AG04450 (cell line): ENCODE measurements at regions of chr4 and their contacts with region 1.

Region 1: GRCh38 chr4:106369456-106370060 is 980 bp upstream of the GIMD1 start:
- DNase-seq: peak; percentile 61
- H3K4me3 ChIP-seq: no peak overlapping the region
- H3K27ac ChIP-seq: no peak overlapping the region
- H3K27me3 ChIP-seq: no peaks in the 10 kb centered on the region
- CTCF ChIP-seq: peak; percentile 82

Region 2: GRCh38 chr4:106231931-106232330 is 137.6 kb before region 1 on chr4:
- CTCF ChIA-PET with region 1: no interaction called
- POLR2A ChIA-PET with region 1: no interaction called
- DNase-seq: no peak
- H3K4me3 ChIP-seq: no peak overlapping the region
- H3K27ac ChIP-seq: no peak overlapping the region
- H3K27me3 ChIP-seq: no peaks in the 10 kb centered on the region
- CTCF ChIP-seq: no peak

Region 3: GRCh38 chr4:106266201-106266600 is 103.4 kb before region 1 on chr4:
- CTCF ChIA-PET with region 1: interaction called, 22 read pairs
- POLR2A ChIA-PET with region 1: no interaction called
- DNase-seq: peak; percentile 18
- H3K4me3 ChIP-seq: no peak overlapping the region
- H3K27ac ChIP-seq: no peak overlapping the region
- H3K27me3 ChIP-seq: no peaks in the 10 kb centered on the region
- CTCF ChIP-seq: peak; percentile 76

Region 4: DNA sequence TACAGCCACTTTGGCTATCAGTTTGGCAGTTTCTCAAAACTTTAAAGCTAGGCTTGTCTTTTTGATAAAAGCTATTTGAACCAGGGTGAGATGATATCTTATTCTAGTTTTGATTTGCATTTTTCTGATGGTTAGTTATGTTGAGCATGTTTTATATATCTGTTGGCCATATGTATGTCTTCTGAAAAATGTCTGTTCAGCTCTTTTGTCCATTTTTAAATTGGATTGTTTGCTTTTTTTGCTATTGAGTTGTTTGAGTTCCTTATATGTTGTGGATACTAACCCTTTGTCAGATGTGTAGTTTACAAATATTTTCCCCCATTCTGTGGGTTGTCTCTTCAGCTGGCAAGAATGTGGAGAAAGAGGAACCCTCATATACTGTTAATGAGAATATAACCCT is 10.6 kb after region 1 on chr4:
- CTCF ChIA-PET with region 1: interaction called, 22 read pairs
- POLR2A ChIA-PET with region 1: no interaction called
- DNase-seq: no peak
- H3K4me3 ChIP-seq: no peak overlapping the region
- H3K27ac ChIP-seq: no peak overlapping the region
- H3K27me3 ChIP-seq: no peaks in the 10 kb centered on the region
- CTCF ChIP-seq: no peak

Region 5: GRCh38 chr4:106809076-106809475 is 439.5 kb after region 1 on chr4:
- CTCF ChIA-PET with region 1: interaction called, 13 read pairs
- POLR2A ChIA-PET with region 1: no interaction called
- DNase-seq: no peak
- H3K4me3 ChIP-seq: no peak overlapping the region
- H3K27ac ChIP-seq: no peak overlapping the region
- H3K27me3 ChIP-seq: no peaks in the 10 kb centered on the region
- CTCF ChIP-seq: peak; percentile 49

Region 6: DNA sequence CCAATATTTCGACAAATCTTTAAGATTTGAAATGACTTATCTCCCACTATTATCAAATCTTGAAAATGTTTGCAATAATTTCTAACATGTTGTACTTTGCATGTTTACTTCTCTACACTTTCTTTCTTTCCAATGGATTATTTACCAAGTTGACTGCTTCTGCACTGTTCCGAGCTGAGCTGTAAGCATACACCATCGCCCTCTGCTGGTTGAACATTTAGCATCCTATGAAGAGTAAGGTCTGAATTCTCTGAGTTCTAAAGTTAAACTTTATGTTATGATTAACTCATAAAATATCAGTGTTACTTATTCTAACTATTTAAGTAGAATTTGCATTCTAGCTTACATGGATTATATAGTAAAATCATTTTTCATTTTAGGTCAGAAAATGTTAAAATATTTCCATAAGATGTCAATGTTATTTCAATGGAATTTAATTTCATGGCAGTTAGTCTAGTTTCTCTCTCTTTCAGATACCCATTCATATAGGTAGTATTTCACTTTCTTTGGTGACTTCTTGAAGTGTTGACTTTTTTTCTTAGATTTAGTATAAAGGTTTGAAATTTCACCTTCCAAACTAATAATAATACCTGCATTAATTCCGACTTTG is 529.2 kb after region 1 on chr4:
- CTCF ChIA-PET with region 1: interaction called, 53 read pairs
- POLR2A ChIA-PET with region 1: no interaction called
- DNase-seq: peak; percentile 7
- H3K4me3 ChIP-seq: no peak overlapping the region
- H3K27ac ChIP-seq: no peak overlapping the region
- H3K27me3 ChIP-seq: no peaks in the 10 kb centered on the region
- CTCF ChIP-seq: peak; percentile 80